ENCODE measurements at regions of chr5 and their contacts with region 1.

Region 1: DNA sequence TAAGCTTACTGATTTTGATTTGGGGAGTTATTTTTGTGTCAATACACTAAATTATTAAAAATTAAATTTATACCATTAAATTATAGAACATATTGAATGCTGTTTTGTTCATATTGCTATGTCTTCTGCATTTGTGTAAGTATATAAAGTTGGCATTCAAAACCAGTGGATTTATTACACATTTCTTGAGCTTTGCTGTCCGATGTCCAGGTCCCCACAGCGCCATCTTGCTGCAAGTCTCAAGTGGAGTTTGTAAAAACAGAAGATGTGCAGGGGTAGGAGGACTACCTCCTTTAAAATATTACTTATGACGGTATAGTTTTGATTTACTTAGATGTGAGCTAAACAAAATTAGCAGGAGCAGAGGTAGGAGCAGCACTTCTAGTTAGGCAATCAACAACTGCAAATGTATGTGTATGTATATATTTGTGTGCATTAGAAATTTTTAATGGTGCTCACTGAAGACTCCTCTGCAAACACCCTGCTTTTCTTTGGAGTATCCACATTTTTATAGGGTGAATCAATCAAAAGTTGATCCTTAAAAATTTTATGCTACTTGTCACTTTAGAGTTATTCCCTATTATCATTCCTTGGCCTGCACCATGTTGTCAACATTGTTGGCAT is 37.4 kb downstream of the CPEB4 start:
- DNase-seq: peak; percentile 25 to 69
- ATAC-seq: peak in 1 of 2 experiments; percentile 64; a peak in 3 of 6 replicates
- H3K4me3 ChIP-seq: no peak overlapping the region
- H3K27ac ChIP-seq: peak overlapping the region; percentile 23 to 67; a peak in 3 of 6 replicates
- H3K4me1 ChIP-seq: peaks cover 61% of the 10 kb centered on the region
- CTCF ChIP-seq: peak; percentile 56
- EP300 ChIP-seq: no peak
- POLR2A ChIP-seq: no peak
- RAD21 ChIP-seq: peak; percentile 48 to 58

Region 2: GRCh38 chr5:173941758-173942401 is 16.3 kb after region 1 on chr5:
- CTCF ChIA-PET with region 1: interaction called, 20 read pairs
- POLR2A ChIA-PET with region 1: no interaction called
- DNase-seq: peak in 1 of 2 experiments; percentile 85
- ATAC-seq: peak; percentile 71 to 93
- H3K4me3 ChIP-seq: peak overlapping the region; percentile 1; the same call in 2 of the 3 replicates
- H3K27ac ChIP-seq: peak overlapping the region; percentile 66 to 84
- H3K4me1 ChIP-seq: peaks cover 62% of the 10 kb centered on the region
- CTCF ChIP-seq: no peak
- EP300 ChIP-seq: no peak
- POLR2A ChIP-seq: no peak
- RAD21 ChIP-seq: peak in 1 of 2 experiments; percentile 14; a peak in 1 of 5 replicates

Region 3: DNA sequence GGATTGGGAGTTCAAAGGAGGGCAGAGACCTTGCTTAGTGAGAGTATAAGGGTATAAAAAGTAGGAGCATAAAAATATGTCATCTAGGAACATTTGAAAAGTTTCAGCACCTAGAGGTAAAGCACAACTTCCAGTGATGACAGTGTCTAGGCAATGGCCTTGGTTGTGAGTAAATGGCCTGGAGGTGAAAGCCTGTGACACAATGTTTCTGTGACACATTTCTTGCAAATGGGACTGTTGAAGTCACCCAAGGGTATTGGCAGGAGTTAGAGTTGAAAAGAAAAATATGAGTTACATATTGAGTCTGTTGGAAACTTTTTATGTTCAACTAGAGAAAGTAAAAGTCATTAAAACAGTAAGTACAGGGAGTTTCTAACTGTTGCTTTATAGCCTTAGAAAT is 78.2 kb after region 1 on chr5:
- CTCF ChIA-PET with region 1: no interaction called
- POLR2A ChIA-PET with region 1: no interaction called
- DNase-seq: no peak
- ATAC-seq: no peak
- H3K4me3 ChIP-seq: no peak overlapping the region
- H3K27ac ChIP-seq: no peak overlapping the region
- H3K4me1 ChIP-seq: no peaks in the 10 kb centered on the region
- CTCF ChIP-seq: no peak
- EP300 ChIP-seq: no peak
- POLR2A ChIP-seq: no peak
- RAD21 ChIP-seq: no peak

Region 4: DNA sequence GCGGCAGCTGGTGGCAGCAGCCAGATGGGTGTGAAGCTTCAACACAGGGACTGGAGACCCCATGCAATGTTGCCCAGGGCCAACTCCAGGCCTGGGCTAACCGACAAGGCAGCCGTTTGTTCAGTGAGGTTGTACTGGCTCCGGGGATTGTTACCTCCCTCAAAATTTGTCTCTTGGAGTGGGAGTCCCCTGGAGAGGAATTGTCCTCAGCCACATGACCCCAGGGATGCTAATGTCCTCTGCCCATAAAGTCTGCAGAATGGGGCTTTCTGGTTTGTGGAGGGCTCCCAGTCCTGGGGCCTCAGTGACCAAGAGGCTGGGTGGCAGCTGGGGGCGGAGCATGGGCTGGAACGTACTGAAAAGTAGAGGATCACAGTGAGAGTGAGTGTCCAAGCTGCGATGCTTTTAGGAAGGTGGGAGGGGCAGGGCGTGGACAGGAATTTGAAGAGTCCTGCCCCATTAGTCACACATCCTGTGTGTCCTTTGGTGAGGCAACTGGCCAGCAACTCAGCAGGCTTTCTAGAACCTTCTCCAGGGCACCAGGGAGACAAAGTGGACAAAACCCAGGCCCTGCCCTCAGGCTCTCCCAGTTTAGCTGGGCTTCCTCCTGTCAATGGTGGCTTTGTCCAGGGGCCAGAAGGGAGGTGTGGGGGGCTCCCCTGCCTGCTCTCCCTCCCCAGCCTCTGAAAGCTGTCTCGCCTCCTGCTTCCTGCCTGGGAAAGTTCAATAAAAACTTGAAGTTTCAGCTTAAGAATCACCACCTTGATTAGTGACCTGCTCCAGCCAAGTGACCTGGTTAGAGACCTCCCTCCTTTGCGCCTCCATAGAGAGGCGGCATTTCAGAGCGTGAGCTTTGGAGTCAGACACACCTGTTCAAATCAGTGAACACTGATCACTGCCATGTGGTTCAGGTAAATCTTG is 234.0 kb after region 1 on chr5:
- CTCF ChIA-PET with region 1: no interaction called
- POLR2A ChIA-PET with region 1: no interaction called
- DNase-seq: peak; percentile 56 to 76
- ATAC-seq: peak; percentile 81 to 88
- H3K4me3 ChIP-seq: no peak overlapping the region
- H3K27ac ChIP-seq: peak overlapping the region; percentile 57 to 58; a peak in 5 of 6 replicates
- H3K4me1 ChIP-seq: peaks cover 9% of the 10 kb centered on the region; the same call in 2 of the 3 replicates
- CTCF ChIP-seq: no peak
- EP300 ChIP-seq: no peak
- POLR2A ChIP-seq: no peak
- RAD21 ChIP-seq: no peak